PC-9 (cell line): ENCODE measurements at regions of chr11 and their contacts with region 1.

Region 1: DNA sequence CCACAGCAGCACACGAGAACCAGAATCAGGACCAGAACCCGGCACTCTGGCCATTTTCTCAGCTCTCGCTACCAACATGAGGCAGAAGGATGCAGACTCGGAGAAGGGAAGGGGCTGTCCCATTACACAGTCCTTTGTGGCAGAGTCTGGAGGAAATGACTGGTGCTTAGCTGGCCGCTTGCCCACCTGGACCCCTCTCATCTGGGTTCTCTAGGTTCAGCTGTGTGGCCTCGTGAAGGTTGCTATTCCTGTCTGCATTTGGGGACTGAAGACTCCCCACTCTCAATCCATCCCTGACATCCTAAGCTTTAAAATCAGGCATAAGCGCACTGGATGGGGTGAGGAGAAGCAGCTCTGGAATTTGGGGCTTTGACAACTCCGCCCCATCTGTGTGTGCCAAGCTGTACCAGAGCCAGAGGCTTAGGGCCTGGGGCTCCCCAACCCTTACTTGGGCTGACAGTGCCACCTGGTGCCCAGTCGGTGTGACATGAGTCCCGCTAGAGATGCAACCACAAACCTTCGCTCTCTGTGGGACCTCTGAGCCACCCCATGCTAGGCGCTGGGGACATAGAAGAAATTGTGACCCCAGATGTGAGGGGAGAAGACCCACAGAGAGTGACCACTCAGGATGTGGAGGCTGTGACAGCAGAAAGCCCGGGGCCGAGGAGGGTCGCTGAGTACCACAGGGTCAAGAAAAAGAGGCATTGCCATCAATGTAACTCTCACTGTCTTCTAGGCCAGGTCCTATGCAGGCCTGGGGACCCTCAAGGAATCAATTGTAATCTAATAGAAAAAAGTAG is 35.9 kb upstream of the FCHSD2 start:
- DNase-seq: peak; percentile 69 to 84
- H3K4me3 ChIP-seq: no peak overlapping the region
- H3K27ac ChIP-seq: no peak overlapping the region
- H3K4me1 ChIP-seq: peaks cover 22% of the 10 kb centered on the region
- H3K27me3 ChIP-seq: no peaks in the 10 kb centered on the region
- CTCF ChIP-seq: peak; percentile 93

Region 2: DNA sequence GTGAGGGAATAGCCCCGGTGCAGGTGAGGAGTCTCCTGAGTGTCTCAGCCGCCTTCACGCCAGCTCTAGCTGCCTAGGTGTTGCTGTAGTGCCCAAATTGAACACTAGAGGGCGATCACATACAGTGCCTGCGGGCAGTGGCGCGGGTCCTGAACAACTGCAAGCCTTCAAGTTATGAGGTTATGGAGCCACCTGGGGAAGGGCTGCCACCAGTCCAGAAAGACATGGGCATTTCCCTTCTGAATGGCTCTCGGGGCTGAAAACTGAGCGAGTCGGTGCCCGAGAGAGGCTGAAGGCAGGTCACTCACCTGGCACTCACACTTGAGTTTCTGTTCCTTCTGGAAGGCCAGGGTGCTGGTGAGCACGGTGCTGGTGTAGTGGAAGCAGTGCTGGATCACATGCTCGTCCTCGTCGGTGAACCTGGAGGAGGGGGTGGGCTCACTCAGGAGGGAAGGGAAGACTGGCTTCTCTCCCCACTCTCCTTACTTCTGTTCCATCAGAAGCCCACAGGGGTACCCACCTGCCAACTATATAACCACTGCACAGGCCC is 592.1 kb before region 1 on chr11:
- CTCF ChIA-PET with region 1: no interaction called
- POLR2A ChIA-PET with region 1: no interaction called
- intact Hi-C with region 1: loop called (anchors 2 kb)
- DNase-seq: peak in 1 of 2 experiments; percentile 66
- H3K4me3 ChIP-seq: no peak overlapping the region
- H3K27ac ChIP-seq: no peak overlapping the region
- H3K4me1 ChIP-seq: no peaks in the 10 kb centered on the region
- H3K27me3 ChIP-seq: no peaks in the 10 kb centered on the region
- CTCF ChIP-seq: peak; percentile 97

Region 3: DNA sequence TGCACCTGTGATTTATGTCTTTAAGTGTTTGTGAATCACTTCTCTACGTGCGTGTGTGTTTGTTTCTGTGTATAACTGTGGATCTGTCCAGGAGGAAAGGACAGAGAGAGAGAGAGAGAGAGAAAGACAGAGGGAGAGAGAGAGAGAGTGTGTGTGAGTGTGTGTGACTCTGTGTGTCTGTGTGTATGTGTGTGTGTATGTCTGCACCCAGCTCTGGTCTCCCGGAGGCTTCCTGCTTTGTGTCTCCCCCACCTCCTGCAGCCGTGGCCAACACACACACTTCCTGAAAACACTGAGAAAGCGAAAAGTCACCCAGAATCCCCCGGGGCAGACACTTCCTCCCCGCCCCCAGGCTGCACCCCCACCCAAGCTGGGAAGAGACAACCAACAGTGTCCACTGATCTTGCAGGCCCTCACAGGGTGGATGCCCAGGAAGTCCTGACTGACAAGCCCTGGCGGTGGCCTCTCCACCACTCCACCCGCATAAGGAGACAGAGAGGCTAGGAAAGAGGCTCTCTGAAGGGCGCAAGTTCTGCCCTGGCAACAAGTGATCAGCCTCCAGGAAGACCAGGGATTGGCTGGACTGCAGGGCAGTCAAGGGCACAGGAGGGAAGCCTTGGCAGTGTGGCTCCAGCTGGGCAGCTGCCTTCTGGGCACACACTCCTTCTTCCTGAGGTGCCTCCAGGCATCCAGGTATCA is 455.8 kb before region 1 on chr11:
- CTCF ChIA-PET with region 1: interaction called, 10 read pairs
- POLR2A ChIA-PET with region 1: interaction called, 25 read pairs
- intact Hi-C with region 1: loop called (anchors 1 kb)
- DNase-seq: peak; percentile 85 to 88
- H3K4me3 ChIP-seq: peak overlapping the region; percentile 59
- H3K27ac ChIP-seq: peak overlapping the region; percentile 45
- H3K4me1 ChIP-seq: peaks cover 15% of the 10 kb centered on the region
- H3K27me3 ChIP-seq: no peaks in the 10 kb centered on the region
- CTCF ChIP-seq: no peak

Region 4: GRCh38 chr11:72924568-72925190 is 253.3 kb before region 1 on chr11:
- CTCF ChIA-PET with region 1: interaction called, 9 read pairs
- POLR2A ChIA-PET with region 1: no interaction called
- intact Hi-C with region 1: loop called (anchors 1 kb)
- DNase-seq: peak in 1 of 2 experiments; percentile 37
- H3K4me3 ChIP-seq: no peak overlapping the region
- H3K27ac ChIP-seq: no peak overlapping the region
- H3K4me1 ChIP-seq: no peaks in the 10 kb centered on the region
- H3K27me3 ChIP-seq: no peaks in the 10 kb centered on the region
- CTCF ChIP-seq: peak; percentile 70

Region 5: GRCh38 chr11:73206801-73207200 is 28.8 kb after region 1 on chr11:
- CTCF ChIA-PET with region 1: no interaction called
- POLR2A ChIA-PET with region 1: interaction called, 11 read pairs
- intact Hi-C with region 1: no loop called
- DNase-seq: peak in 1 of 2 experiments; percentile 92
- H3K4me3 ChIP-seq: no peak overlapping the region
- H3K27ac ChIP-seq: peak overlapping the region; percentile 73
- H3K4me1 ChIP-seq: peaks cover 56% of the 10 kb centered on the region
- H3K27me3 ChIP-seq: no peaks in the 10 kb centered on the region
- CTCF ChIP-seq: no peak

Region 6: GRCh38 chr11:73729594-73730206 is 551.7 kb after region 1 on chr11:
- CTCF ChIA-PET with region 1: no interaction called
- POLR2A ChIA-PET with region 1: no interaction called
- intact Hi-C with region 1: no loop called
- DNase-seq: peak in 1 of 2 experiments; percentile 7
- H3K4me3 ChIP-seq: no peak overlapping the region
- H3K27ac ChIP-seq: no peak overlapping the region
- H3K4me1 ChIP-seq: no peaks in the 10 kb centered on the region
- H3K27me3 ChIP-seq: no peaks in the 10 kb centered on the region
- CTCF ChIP-seq: peak; percentile 66